ENCODE measurements at regions of chr11 and their contacts with region 1.

Region 1: GRCh38 chr11:4636962-4637661 is at the start of gene OR51D1:
- DNase-seq: peak; percentile 66 to 79
- H3K4me3 ChIP-seq: peak within 1 kb of the TSS; percentile 40 to 52
- H3K27ac ChIP-seq: peak within 1 kb of the TSS; percentile 14 to 43
- H3K4me1 ChIP-seq: peaks cover 0 to 12% (median 5%) of the 10 kb centered on the region in 4 donors
- H3K27me3 ChIP-seq: no peaks in the 10 kb centered on the region
- CTCF ChIP-seq: peak; percentile 87 to 92

Region 2: DNA sequence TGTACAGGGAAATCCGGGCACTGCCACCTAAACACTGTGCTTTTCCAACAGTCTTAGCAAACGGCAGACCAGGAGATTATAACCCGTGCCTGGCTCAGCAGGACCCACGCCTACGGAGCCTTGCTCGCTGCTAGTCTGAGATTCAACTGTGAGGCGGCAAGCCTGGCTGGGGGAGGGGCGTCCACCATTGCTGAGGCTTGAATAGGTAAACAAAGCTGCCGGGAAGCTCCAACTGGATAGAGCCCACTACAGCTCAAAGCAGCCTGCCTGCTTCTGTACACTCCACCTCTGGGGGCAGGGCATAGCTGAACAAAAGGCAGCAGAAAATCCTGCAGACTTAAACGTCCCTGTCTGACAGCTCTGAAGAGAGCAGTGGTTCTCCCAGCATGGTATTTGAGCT is 105.4 kb before region 1 on chr11:
- intact Hi-C with region 1: no loop called
- DNase-seq: no peak
- H3K4me3 ChIP-seq: no peak overlapping the region
- H3K27ac ChIP-seq: no peak overlapping the region
- H3K4me1 ChIP-seq: no peaks in the 10 kb centered on the region
- H3K27me3 ChIP-seq: no peaks in the 10 kb centered on the region
- CTCF ChIP-seq: no peak

Region 3: GRCh38 chr11:4672470-4672869 is 35.4 kb after region 1 on chr11:
- intact Hi-C with region 1: no loop called
- DNase-seq: no peak
- H3K4me3 ChIP-seq: no peak overlapping the region
- H3K27ac ChIP-seq: peak overlapping the region; percentile 54 to 70
- H3K4me1 ChIP-seq: peaks cover 0 to 37% (median 2%) of the 10 kb centered on the region in 4 donors
- H3K27me3 ChIP-seq: no peaks in the 10 kb centered on the region
- CTCF ChIP-seq: no peak

Region 4: GRCh38 chr11:4682623-4683419 is 45.7 kb after region 1 on chr11:
- intact Hi-C with region 1: no loop called
- DNase-seq: no peak
- H3K4me3 ChIP-seq: no peak overlapping the region
- H3K27ac ChIP-seq: no peak overlapping the region
- H3K4me1 ChIP-seq: peaks cover 0 to 23% (median 0%) of the 10 kb centered on the region in 4 donors
- H3K27me3 ChIP-seq: no peaks in the 10 kb centered on the region
- CTCF ChIP-seq: no peak

Region 5: GRCh38 chr11:4826425-4826824 is 189.3 kb after region 1 on chr11:
- intact Hi-C with region 1: loop called (anchors 5 kb)
- DNase-seq: no peak
- H3K4me3 ChIP-seq: no peak overlapping the region
- H3K27ac ChIP-seq: no peak overlapping the region
- H3K4me1 ChIP-seq: no peaks in the 10 kb centered on the region
- H3K27me3 ChIP-seq: no peaks in the 10 kb centered on the region
- CTCF ChIP-seq: peak; percentile 55 to 60

Measured in tibial artery (tissue), 4 donors.